Breast epithelium (tissue), 4 donors: ENCODE measurements at regions of chr15 and their contacts with region 1.

Region 1: DNA sequence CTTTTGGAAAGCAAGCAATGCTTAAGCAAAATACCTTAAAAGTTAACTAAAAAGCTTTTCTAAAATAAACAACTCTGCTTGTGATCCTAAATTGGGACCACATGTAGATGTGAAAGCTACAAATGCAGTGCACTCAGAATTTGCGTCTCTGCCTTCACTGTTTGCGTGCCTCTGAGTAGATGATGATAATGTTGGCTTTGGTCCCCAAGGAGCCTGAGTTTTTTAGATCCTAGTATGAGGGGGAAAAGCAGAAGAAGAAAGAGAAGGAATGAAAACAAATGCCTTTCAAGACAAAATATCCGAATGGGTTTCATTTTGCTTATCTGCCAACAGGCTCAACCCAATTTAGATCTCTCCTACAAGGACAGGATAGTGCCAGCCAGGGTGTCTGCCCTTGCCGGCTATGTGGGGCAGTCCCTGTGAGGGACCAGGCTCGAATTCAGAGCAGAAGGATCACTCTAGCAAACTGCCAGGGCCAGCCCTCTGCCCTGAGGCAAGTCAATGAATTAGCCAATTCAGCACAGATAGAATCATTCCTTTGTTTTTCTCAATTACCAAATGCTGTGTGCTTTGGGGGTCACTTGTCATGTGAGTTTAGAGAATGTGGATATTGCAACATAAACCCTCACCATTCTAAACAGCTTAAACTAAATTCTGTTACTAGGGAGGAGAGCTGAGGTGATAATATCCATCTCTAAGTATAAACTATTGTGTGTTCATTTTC is 28.5 kb downstream of the SCG5 start:
- DNase-seq: peak in 1 of 2 donors; percentile 79
- H3K4me3 ChIP-seq: peak overlapping the region in 1 of 3 donors; percentile 36
- H3K27ac ChIP-seq: peak overlapping the region; percentile 76 to 86
- H3K4me1 ChIP-seq: no peaks in the 10 kb centered on the region
- H3K27me3 ChIP-seq: no peaks in the 10 kb centered on the region
- CTCF ChIP-seq: no peak
- POLR2A ChIP-seq: no peak

Region 2: GRCh38 chr15:33699691-33700447 is 1029.8 kb after region 1 on chr15:
- intact Hi-C with region 1: loop called (anchors 5 kb)
- DNase-seq: no peak
- H3K4me3 ChIP-seq: no peak overlapping the region
- H3K27ac ChIP-seq: no peak overlapping the region
- H3K4me1 ChIP-seq: no peaks in the 10 kb centered on the region
- H3K27me3 ChIP-seq: no peaks in the 10 kb centered on the region
- CTCF ChIP-seq: no peak
- POLR2A ChIP-seq: no peak